Heart left ventricle (tissue), 16 donors: ENCODE measurements at regions of chr22 and their contacts with region 1.

Region 1: GRCh38 chr22:33000342-33001280 is 57.6 kb downstream of the SYN3 start:
- DNase-seq: peak; percentile 45 to 77 (median 54)
- ATAC-seq: peak in 3 of 4 donors; percentile 75 to 79 (median 78)
- H3K4me3 ChIP-seq: no peak overlapping the region
- H3K27ac ChIP-seq: no peak overlapping the region
- H3K4me1 ChIP-seq: peaks cover 0 to 14% (median 5%) of the 10 kb centered on the region in 12 donors
- H3K27me3 ChIP-seq: no peaks in the 10 kb centered on the region
- CTCF ChIP-seq: peak; percentile 84 to 98 (median 94)
- POLR2A ChIP-seq: no peak

Region 2: DNA sequence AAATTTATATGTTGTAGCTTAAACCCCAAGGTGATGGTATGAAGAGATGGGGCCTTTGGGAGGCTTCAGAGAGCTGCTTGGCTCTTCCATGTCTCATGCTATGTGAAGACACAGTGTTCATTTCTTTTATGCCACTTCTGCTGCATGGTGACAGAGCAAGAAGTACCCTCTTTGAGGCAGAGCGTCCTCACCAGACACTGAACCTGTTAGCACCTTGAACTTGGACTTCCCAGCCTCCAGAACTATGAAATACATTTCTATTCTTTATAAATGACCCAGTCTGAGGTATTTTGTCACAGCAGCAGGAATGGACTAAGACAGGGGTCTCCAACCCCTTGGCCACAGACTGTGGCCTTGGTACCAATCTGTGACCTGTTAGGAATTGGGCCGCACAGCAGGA is 345.5 kb before region 1 on chr22:
- intact Hi-C with region 1: loop called in 8 of 10 experiments (anchors 1 to 5 kb)
- DNase-seq: no peak
- ATAC-seq: no peak
- H3K4me3 ChIP-seq: no peak overlapping the region
- H3K27ac ChIP-seq: no peak overlapping the region
- H3K4me1 ChIP-seq: peaks cover 0 to 7% (median 1%) of the 10 kb centered on the region in 12 donors
- H3K27me3 ChIP-seq: no peaks in the 10 kb centered on the region
- CTCF ChIP-seq: no peak
- POLR2A ChIP-seq: no peak

Region 3: DNA sequence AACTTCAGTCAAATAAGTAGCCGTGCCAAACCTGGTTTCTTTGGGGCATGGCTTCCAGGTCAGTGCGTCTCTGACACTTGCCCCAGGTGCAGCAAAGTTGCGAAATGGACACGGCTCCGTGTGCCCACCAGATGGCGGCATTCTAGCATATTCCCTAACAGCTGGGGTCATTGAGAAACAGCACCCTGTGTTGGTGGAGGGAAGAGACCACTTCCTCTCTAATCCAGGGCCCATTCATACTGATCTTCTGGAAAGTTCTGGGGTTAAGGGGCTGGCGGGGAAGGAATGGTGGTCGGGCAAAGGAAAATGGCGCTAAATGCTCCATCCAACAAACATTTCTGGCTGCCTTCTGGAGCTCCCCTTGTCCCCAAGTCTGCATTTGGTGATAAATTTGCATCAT is 340.3 kb before region 1 on chr22:
- intact Hi-C with region 1: loop called in 8 of 10 experiments (anchors 1 to 5 kb)
- DNase-seq: peak; percentile 66 to 79 (median 73)
- ATAC-seq: peak in 3 of 4 donors; percentile 64 to 79 (median 78)
- H3K4me3 ChIP-seq: no peak overlapping the region
- H3K27ac ChIP-seq: peak overlapping the region in 3 of 12 donors; percentile 32 to 69 (median 42)
- H3K4me1 ChIP-seq: peaks cover 0 to 27% (median 0%) of the 10 kb centered on the region in 12 donors
- H3K27me3 ChIP-seq: no peaks in the 10 kb centered on the region
- CTCF ChIP-seq: peak; percentile 66 to 88 (median 74)
- POLR2A ChIP-seq: no peak

Region 4: DNA sequence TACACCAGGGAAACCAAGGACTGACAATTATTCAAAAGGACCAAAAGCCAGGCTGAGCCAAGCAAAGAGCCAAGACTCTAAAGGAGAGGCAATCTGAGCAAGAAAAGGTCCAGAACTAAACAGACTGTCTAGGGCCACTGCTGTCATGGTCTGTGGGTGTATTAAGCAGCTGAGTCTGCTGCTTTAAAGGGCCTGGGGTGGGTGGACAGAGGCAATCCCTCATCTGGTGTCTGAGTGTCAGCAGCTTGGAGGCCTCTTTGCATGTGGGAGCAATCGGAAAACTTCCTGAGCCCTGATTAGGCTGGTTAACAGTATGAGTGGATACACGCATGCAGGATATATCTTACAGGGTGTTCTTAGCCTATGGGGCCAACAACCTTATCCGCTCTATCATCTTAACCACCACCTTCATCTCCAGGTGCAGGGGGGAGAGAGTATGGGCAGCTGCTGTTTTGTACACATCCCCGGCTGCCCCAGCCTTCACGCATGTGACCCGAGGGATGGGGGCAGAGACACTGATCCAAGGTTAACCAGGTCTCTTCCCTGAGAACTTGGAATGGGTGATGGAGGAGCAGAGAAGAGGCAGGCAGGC is 266.6 kb before region 1 on chr22:
- intact Hi-C with region 1: no loop called
- DNase-seq: no peak
- ATAC-seq: peak in 3 of 4 donors; percentile 39 to 87 (median 53)
- H3K4me3 ChIP-seq: no peak overlapping the region
- H3K27ac ChIP-seq: no peak overlapping the region
- H3K4me1 ChIP-seq: peaks cover 0 to 13% (median 2%) of the 10 kb centered on the region in 12 donors
- H3K27me3 ChIP-seq: no peaks in the 10 kb centered on the region
- CTCF ChIP-seq: no peak
- POLR2A ChIP-seq: no peak